ENCODE measurements at regions of chr19 and their contacts with region 1.

Region 1: DNA sequence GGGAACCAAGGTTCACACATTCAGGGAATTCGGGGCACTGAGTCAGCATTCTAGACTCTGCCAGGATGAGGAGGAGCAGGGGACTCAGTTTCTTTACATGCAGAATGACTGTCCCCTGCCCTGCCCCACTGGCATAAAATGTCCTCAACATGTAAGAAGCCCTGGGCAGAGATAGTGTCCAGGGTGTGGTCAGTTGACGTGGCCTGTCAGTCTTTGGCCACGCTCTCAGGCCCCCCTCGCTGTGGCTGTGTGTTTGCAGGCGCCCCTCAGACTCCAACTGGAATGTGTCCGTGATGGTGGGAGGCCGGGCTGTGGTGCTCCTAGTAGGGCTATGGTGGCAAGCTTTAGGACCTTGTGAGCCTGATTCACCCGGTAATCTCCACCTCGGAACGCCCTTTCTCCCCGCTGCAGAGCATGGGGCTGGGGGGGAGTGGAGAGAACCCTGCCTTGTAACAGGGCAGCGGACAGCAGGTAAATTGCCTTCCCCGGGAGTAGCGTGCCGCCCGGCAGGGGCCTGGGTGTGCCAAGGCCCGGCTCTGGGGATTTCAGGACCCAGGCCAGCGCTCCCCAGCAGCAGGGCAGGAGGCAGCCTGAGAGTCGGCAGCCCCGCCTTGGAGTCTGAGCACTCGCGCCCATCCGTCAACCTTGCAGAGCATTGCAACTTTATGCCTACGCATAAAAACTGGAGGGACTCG is 62.2 kb downstream of the CHST8 start:
- DNase-seq: peak; percentile 13 to 31 (median 31)
- ATAC-seq: peak; percentile 34
- H3K4me3 ChIP-seq: no peak overlapping the region
- H3K4me1 ChIP-seq: no peaks in the 10 kb centered on the region
- CTCF ChIP-seq: no peak

Region 2: DNA sequence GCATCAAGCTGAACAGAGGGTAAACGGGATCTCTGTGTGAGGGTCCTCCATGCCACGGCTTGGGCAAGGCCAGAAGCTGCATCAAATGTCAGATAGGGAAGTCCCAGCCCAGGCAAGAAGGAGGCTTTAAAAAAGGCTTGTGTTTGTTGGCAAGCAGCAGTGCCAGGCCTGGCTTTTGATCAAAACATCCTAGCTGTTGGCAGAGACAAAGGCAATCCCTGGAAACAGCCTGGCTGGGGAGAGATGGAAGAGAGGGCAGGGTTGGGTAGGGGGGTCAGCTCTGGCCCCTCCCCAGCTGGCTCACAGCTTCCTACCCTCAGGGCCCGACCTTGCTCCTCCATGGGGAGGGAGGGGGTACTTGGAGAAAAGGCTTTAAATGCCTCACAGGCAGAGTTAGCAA is 50.9 kb after region 1 on chr19:
- intact Hi-C with region 1: loop called in 1 of 2 experiments (anchors 2 kb)
- DNase-seq: no peak
- ATAC-seq: no peak
- H3K4me3 ChIP-seq: no peak overlapping the region
- H3K4me1 ChIP-seq: no peaks in the 10 kb centered on the region
- CTCF ChIP-seq: no peak